ENCODE measurements at regions of chr2 and their contacts with region 1.

Region 1: DNA sequence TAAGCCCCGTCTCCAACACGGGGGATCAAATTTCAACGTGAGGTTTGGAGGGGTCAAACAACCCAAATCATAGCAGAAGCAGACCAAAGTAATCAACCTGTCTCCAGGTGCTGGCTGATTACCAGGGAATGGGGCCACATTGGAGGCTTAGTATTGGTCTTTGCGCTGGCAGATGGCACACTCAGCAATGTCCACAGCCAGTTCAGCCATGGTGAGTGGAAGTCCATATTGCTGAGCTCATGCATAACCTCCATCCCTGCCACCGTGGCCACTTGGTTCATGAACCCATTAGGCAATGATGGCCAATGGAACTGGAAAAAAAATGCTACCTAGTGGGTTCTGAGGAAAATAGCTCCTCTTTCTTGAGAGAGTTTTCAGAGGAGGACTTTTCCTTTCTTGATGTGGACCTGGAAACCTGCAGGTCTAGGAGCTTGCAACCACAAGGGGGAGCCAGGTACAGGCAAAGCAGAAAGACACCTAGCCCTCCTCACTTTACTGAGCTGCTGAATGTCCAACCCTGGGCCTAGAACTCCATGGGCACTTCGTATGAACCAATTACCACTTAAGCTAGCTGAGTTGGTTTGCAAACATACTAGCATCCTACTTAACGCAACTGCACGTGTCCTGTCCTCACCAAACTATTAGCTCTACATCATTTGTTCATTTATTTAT is 128.0 kb upstream of the GYPC start:
- DNase-seq: peak in 1 of 2 donors; percentile 81
- H3K4me3 ChIP-seq: no peak overlapping the region
- H3K27ac ChIP-seq: no peak overlapping the region
- H3K4me1 ChIP-seq: no peaks in the 10 kb centered on the region
- H3K27me3 ChIP-seq: no peaks in the 10 kb centered on the region
- CTCF ChIP-seq: peak in 1 of 3 experiments; percentile 50
- POLR2A ChIP-seq: no peak

Region 2: GRCh38 chr2:126586317-126586716 is 58.3 kb after region 1 on chr2:
- intact Hi-C with region 1: no loop called
- DNase-seq: no peak
- H3K4me3 ChIP-seq: no peak overlapping the region
- H3K27ac ChIP-seq: no peak overlapping the region
- H3K4me1 ChIP-seq: no peaks in the 10 kb centered on the region
- H3K27me3 ChIP-seq: no peaks in the 10 kb centered on the region
- CTCF ChIP-seq: no peak
- POLR2A ChIP-seq: no peak

Region 3: GRCh38 chr2:126776692-126777619 is 249.0 kb after region 1 on chr2:
- intact Hi-C with region 1: loop called (anchors 5 kb)
- DNase-seq: no peak
- H3K4me3 ChIP-seq: peak overlapping the region; percentile 54 to 57
- H3K27ac ChIP-seq: no peak overlapping the region
- H3K4me1 ChIP-seq: peaks cover 10% of the 10 kb centered on the region
- H3K27me3 ChIP-seq: no peaks in the 10 kb centered on the region
- CTCF ChIP-seq: peak; percentile 66 to 93 (median 89)
- POLR2A ChIP-seq: no peak